ENCODE measurements at regions of chr10 and their contacts with region 1.

Region 1: DNA sequence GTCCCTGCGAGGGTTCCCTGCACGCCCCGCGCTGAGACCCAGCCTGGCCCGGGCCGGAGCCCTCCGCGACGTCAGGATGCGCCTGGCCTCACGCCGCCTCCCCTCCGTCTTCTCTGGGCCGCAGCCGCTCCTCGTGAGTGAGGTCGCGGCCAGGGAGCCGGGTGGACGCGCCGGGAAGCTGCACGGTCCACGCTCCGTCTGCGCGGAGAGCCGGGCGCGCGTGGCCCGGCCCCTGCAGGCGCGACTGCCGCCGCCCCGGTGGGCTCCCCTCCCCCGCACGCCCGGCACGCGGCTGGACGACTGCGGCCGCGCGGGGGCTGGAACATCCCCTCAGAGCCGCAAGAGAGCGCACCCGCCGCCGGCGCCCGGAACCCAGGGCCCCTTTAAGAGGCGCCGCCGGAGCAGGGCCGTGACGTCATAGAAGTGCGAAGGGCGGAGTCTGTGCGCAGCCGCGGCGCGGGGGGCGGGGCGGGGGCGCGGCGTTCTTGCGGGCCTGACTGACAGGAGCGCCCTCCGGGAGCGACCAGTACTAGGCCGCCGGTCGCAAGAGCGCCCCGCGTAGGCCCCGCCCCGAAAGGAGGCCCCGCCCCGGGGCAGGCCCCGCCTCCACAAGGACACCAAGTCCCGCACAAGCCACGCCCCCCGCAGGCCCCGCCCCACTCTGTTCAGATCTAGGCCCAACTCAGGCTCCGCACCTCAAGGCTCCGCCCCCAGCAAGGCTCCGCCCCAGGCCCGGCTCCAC is 445 bp upstream of the INPP5A start:
- DNase-seq: peak; percentile 100
- ATAC-seq: peak; percentile 89
- H3K4me3 Mint-ChIP-seq: peak overlapping the region; percentile 68
- H3K27ac Mint-ChIP-seq: no peak overlapping the region
- H3K4me1 Mint-ChIP-seq: peaks cover 49% of the 10 kb centered on the region
- H3K27me3 Mint-ChIP-seq: no peaks in the 10 kb centered on the region

Region 2: GRCh38 chr10:131981429-131982184 is 555.5 kb before region 1 on chr10 and contains the start of gene BNIP3:
- CTCF ChIA-PET with region 1: no interaction called
- POLR2A ChIA-PET with region 1: no interaction called
- intact Hi-C with region 1: loop called in 1 of 2 experiments (anchors 2 kb)
- DNase-seq: peak; percentile 97
- ATAC-seq: peak; percentile 90
- H3K4me3 Mint-ChIP-seq: peak within 1 kb of the TSS; percentile 90
- H3K27ac Mint-ChIP-seq: peak within 1 kb of the TSS; percentile 79
- H3K4me1 Mint-ChIP-seq: peaks cover 36% of the 10 kb centered on the region
- H3K27me3 Mint-ChIP-seq: no peaks in the 10 kb centered on the region
- total RNA-seq, gene BNIP3: 200 to 256 TPM

Region 3: DNA sequence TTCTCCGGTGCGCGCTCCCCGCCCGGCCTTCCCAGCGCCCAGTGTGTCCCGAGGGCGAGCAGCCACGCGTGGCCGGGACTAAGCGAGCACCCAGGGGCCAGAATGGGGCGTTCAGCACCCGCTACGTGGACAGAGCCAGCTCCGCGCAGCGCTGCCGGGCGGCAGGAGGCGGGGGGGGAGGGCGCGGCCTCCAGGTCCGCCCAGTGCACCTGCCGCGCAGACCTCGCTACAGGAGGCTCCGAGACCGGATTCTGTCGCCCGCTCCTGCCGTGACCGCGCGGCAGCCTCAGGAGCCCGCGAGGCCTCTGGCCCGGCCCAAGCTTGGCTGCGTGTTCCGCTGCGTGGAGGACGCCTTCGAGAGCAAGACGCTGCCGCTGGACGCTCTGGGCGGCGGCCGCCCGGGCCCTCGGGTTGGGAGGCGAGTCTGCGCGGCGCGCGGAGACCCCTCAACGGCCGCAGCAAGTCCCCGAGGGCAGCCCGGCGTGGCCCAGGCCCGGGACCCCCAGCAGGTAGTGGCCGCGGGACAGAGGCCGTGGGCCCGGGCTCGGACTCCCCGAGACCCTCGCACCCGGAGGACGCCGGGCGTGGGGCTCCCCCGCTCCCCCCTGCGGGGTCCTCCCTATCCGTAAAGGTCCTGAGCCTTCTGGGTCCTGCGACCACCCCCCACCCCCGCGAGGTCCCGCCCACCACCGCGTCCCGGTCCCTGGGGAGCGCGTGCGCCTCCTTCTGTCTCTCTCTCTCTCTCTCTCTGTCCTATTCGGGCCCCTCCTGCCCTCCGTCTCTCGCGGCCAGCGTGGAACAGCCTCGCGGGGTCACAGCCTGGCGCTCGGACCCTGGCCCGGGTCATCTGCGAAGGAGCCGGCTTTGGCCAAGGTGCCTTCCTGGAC is 351.3 kb before region 1 on chr10:
- CTCF ChIA-PET with region 1: no interaction called
- POLR2A ChIA-PET with region 1: no interaction called
- intact Hi-C with region 1: loop called in 1 of 2 experiments (anchors 1 kb)
- DNase-seq: peak; percentile 76
- ATAC-seq: peak; percentile 85
- H3K4me3 Mint-ChIP-seq: no peak overlapping the region
- H3K27ac Mint-ChIP-seq: no peak overlapping the region
- H3K4me1 Mint-ChIP-seq: peaks cover 3% of the 10 kb centered on the region
- H3K27me3 Mint-ChIP-seq: peaks cover 37% of the 10 kb centered on the region

Region 4: DNA sequence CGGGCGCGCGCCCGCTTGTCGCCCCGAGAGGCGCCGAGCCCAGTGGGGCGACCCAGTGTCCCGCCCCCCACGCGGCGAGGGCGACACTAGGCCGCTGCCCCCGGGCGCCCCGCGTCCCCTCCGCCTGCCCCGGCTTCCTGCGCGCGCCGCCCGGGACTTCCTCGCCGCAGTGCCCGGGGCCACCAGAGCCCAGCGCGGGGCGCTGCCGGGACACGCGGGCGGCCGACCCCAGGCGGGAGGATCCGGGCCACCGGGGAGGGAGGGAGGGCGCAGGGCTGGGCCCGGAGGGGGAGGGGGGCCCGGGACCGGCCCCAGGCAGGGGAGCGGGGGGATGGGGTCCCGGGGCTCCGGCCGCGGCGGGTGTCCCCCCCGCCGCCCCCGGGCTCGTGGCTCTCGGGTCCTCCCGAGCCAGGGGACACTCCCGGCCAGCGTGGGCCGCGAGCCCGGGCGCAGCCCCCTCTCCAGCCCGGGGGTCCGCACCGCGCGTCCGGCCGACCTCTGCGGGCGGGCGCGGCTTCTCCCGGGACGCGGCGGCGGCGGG is 140.6 kb before region 1 on chr10:
- CTCF ChIA-PET with region 1: no interaction called
- POLR2A ChIA-PET with region 1: no interaction called
- intact Hi-C with region 1: loop called in 1 of 2 experiments (anchors 2 kb)
- DNase-seq: peak; percentile 78
- ATAC-seq: peak; percentile 75
- H3K4me3 Mint-ChIP-seq: no peak overlapping the region
- H3K27ac Mint-ChIP-seq: no peak overlapping the region
- H3K4me1 Mint-ChIP-seq: peaks cover 13% of the 10 kb centered on the region
- H3K27me3 Mint-ChIP-seq: no peaks in the 10 kb centered on the region

Region 5: GRCh38 chr10:132571650-132572535 is 34.8 kb after region 1 on chr10:
- CTCF ChIA-PET with region 1: interaction called, 8 read pairs
- POLR2A ChIA-PET with region 1: interaction called, 10 read pairs
- intact Hi-C with region 1: loop called (anchors 1 to 2 kb)
- DNase-seq: peak; percentile 83
- ATAC-seq: peak; percentile 85
- H3K4me3 Mint-ChIP-seq: peak overlapping the region; percentile 15
- H3K27ac Mint-ChIP-seq: no peak overlapping the region
- H3K4me1 Mint-ChIP-seq: peaks cover 33% of the 10 kb centered on the region
- H3K27me3 Mint-ChIP-seq: no peaks in the 10 kb centered on the region

Region 6: DNA sequence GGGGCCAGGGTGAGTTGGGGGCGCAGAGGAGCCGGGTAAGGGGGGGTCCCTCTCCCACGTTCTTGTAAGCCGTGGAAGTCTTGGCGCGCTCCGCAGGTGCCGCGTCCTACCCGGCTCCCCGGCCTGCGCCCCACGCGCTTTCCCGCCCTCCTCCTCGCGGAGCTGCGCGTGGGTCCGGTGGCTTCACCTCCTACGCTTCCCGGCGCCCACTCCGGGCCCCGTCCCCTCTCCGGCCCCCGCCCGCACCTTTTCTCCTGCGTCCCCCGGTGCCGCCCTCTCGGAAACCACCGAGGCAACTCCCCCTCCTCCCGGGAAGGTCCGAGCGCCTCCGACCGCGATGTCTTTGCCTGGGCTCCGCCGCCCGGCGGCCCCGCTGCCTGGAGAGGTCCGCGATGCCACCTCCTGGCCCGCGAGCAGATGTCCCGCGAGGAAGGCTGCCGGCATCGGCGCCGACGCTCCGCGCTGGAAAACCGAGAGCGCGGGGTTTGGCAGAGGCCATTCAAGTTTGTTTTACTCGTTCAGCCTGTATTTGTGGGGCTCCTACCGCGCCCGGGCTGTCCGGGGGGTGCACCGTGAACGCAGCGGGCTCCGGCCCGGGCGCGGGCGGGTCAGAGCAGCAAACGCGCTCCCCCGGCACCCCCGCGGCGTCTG is 251.2 kb after region 1 on chr10:
- CTCF ChIA-PET with region 1: no interaction called
- POLR2A ChIA-PET with region 1: no interaction called
- intact Hi-C with region 1: no loop called
- DNase-seq: peak; percentile 26
- ATAC-seq: no peak
- H3K4me3 Mint-ChIP-seq: no peak overlapping the region
- H3K27ac Mint-ChIP-seq: no peak overlapping the region
- H3K4me1 Mint-ChIP-seq: no peaks in the 10 kb centered on the region
- H3K27me3 Mint-ChIP-seq: peaks cover 17% of the 10 kb centered on the region

Region 7: GRCh38 chr10:133261726-133262325 is 724.7 kb after region 1 on chr10:
- CTCF ChIA-PET with region 1: no interaction called
- POLR2A ChIA-PET with region 1: no interaction called
- intact Hi-C with region 1: loop called in 1 of 2 experiments (anchors 1 kb)
- DNase-seq: peak; percentile 93
- ATAC-seq: peak; percentile 30
- H3K4me3 Mint-ChIP-seq: peak overlapping the region; percentile 74
- H3K27ac Mint-ChIP-seq: no peak overlapping the region
- H3K4me1 Mint-ChIP-seq: peaks cover 76% of the 10 kb centered on the region
- H3K27me3 Mint-ChIP-seq: no peaks in the 10 kb centered on the region

Measured in activated CD4-positive, alpha-beta T cell treated with anti-CD3 and anti-CD28 coated beads for 36 hours (primary cell).